GM12878 (cell line): ENCODE measurements at regions of chr3 and their contacts with region 1.

Region 1: DNA sequence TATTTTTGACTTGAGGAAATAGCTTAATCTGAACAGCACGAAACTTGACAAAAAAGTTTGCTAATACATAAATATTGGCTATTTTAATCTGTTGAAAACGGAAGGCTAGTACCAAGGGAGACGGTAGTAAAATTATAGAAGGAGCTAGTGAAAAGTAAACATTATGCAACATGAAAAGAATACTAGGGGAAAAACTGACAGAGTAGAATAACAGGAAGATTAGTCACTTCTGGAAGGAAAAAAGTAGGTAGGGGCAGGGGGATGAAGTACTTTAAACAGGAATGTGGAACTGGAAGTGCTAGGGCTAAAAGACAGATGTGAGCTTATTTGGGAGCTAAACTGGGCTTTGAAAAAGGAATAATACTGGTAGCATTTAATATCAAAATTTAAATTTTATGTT is 60.1 kb downstream of the MBNL1 start:
- DNase-seq: no peak
- ATAC-seq: no peak
- H3K4me3 ChIP-seq: no peak overlapping the region
- H3K27ac ChIP-seq: no peak overlapping the region; the same call in 1 of the 2 replicates
- H3K4me1 ChIP-seq: peaks cover 24% of the 10 kb centered on the region
- H3K27me3 ChIP-seq: no peaks in the 10 kb centered on the region
- CTCF ChIP-seq: no peak
- EP300 ChIP-seq: no peak
- POLR2A ChIP-seq: no peak
- RAD21 ChIP-seq: no peak

Region 2: DNA sequence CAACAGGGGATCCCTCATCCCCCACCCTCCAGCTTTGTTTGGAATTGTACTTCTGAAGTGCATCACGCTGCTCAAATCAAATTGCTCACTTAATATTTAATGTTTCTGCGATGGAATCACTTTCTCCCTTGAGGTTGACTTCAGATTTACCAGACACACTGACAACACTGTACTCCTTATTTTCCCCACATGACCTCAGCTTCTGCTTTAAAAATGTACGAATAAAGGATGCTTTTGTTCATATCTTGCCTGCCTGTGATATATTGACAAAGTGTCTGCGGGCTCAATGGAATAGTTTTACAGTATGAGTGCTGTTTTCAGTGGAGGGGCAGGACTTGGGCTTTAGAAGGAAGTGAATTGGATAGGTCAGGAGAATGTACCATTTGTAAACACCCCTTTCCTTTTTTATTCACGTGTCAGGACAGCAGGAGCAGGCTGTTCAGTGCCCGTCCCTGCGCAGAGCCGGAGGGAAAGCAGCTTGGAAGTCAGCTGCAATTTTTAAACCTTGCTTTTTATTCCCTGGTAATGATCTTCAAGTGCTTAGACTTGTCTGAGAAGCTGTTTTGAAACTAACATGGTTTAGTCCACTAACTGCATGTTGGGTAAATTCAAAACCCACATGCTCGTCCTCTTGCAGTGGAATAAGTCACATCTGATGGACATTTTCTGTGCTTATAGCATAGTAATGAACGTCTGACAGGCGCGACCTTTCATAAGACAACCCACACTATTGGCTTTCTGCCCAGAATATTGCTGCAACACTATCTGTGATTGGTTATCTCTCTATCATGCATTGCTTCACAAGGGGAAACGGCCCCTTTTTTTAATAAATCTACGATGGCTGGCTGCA is 30.2 kb before region 1 on chr3:
- CTCF ChIA-PET with region 1: interaction called, 5 read pairs
- POLR2A ChIA-PET with region 1: interaction called, 5 read pairs
- RAD21 ChIA-PET with region 1: interaction called, 12 read pairs
- SMC1A ChIA-PET with region 1: interaction called, 20 read pairs
- in situ Hi-C with region 1: no loop called
- intact Hi-C with region 1: no loop called
- DNase-seq: peak; percentile 74
- ATAC-seq: peak; percentile 71
- H3K4me3 ChIP-seq: peak overlapping the region; percentile 8
- H3K27ac ChIP-seq: peak overlapping the region; percentile 56
- H3K4me1 ChIP-seq: peaks cover 40% of the 10 kb centered on the region
- H3K27me3 ChIP-seq: no peaks in the 10 kb centered on the region
- CTCF ChIP-seq: no peak
- EP300 ChIP-seq: no peak
- POLR2A ChIP-seq: no peak
- RAD21 ChIP-seq: no peak

Region 3: GRCh38 chr3:152309535-152310307 is 19.1 kb before region 1 on chr3:
- CTCF ChIA-PET with region 1: interaction called, 4 read pairs
- POLR2A ChIA-PET with region 1: interaction called, 5 read pairs
- RAD21 ChIA-PET with region 1: interaction called, 3 read pairs
- SMC1A ChIA-PET with region 1: interaction called, 17 read pairs
- in situ Hi-C with region 1: no loop called
- intact Hi-C with region 1: no loop called
- DNase-seq: no peak
- ATAC-seq: peak; percentile 49
- H3K4me3 ChIP-seq: no peak overlapping the region
- H3K27ac ChIP-seq: no peak overlapping the region
- H3K4me1 ChIP-seq: no peaks in the 10 kb centered on the region
- H3K27me3 ChIP-seq: no peaks in the 10 kb centered on the region
- CTCF ChIP-seq: no peak
- EP300 ChIP-seq: no peak
- POLR2A ChIP-seq: no peak
- RAD21 ChIP-seq: no peak

Region 4: GRCh38 chr3:152346740-152347139 is 17.9 kb after region 1 on chr3:
- CTCF ChIA-PET with region 1: interaction called, 14 read pairs
- POLR2A ChIA-PET with region 1: interaction called, 8 read pairs
- RAD21 ChIA-PET with region 1: interaction called, 4 read pairs
- SMC1A ChIA-PET with region 1: interaction called, 16 read pairs
- in situ Hi-C with region 1: no loop called
- intact Hi-C with region 1: no loop called
- DNase-seq: no peak
- ATAC-seq: no peak
- H3K4me3 ChIP-seq: no peak overlapping the region
- H3K27ac ChIP-seq: no peak overlapping the region
- H3K4me1 ChIP-seq: no peaks in the 10 kb centered on the region; the same call in 1 of the 2 replicates
- H3K27me3 ChIP-seq: no peaks in the 10 kb centered on the region
- CTCF ChIP-seq: no peak
- EP300 ChIP-seq: no peak
- POLR2A ChIP-seq: no peak
- RAD21 ChIP-seq: no peak

Region 5: DNA sequence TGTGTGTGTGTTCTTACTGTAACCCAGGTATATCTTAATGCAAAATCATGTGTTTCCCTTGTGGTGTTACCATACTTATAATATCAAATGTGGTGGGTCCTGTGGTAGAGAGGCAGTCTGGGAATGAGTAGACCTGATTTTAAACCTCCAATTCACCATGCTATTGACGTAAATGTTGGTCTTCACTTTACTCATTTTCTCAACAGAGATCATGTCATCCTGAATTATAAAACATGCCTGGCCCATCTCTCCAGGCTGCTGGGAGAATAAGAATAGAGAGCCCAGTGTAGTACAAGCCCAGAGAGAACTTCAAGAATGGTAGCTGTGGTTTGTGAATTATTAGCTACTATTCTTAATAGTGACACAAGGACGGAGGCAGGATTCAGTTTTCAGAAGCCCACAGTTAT is 28.0 kb after region 1 on chr3:
- CTCF ChIA-PET with region 1: interaction called, 3 read pairs
- POLR2A ChIA-PET with region 1: interaction called, 5 read pairs
- RAD21 ChIA-PET with region 1: interaction called, 7 read pairs
- SMC1A ChIA-PET with region 1: interaction called, 16 read pairs
- in situ Hi-C with region 1: no loop called
- intact Hi-C with region 1: no loop called
- DNase-seq: peak; percentile 61
- ATAC-seq: peak; percentile 89
- H3K4me3 ChIP-seq: no peak overlapping the region
- H3K27ac ChIP-seq: peak overlapping the region; percentile 48
- H3K4me1 ChIP-seq: peaks cover 14% of the 10 kb centered on the region
- H3K27me3 ChIP-seq: no peaks in the 10 kb centered on the region
- CTCF ChIP-seq: no peak
- EP300 ChIP-seq: peak; percentile 90
- POLR2A ChIP-seq: no peak
- RAD21 ChIP-seq: no peak

Region 6: DNA sequence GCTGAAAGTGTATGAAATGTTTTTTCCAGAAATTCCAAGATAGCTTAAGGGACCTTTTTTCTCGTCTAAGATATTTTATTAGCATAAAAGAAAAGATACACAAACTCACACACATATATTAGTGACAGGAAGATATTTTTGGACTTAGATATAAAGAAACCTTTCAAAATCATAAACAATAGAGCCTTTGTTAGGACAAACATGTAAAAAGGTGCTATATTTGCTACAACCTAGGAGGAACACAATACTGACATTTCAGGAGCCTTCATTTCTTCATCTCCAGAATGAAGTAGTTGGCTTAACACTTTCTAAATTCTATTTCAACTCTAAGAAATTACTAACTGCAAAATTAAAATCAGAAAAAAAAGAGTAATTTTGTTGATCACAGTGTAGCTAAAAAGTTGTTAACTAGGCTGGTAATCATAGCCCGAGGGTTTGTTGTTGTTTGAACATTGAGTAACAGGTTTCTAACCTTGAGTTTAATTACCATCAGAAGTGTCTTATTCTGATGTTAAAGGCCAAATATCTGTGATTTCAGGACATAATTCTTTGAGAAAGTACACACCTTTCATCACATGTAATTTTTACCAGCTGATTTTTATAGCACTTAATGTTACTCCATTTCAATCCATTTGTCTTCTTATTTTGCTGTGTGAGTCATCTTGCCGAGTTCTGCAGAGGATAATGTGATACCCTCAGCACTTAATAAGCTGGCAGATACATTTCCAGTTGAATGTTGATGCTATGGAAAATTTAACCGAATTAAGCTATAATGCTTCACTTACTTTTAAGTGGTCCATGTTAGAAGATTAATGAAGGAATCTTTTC is 37.1 kb after region 1 on chr3:
- CTCF ChIA-PET with region 1: interaction called, 5 read pairs
- POLR2A ChIA-PET with region 1: interaction called, 4 read pairs
- RAD21 ChIA-PET with region 1: interaction called, 3 read pairs
- SMC1A ChIA-PET with region 1: interaction called, 11 read pairs
- in situ Hi-C with region 1: no loop called
- intact Hi-C with region 1: no loop called
- DNase-seq: no peak
- ATAC-seq: no peak
- H3K4me3 ChIP-seq: no peak overlapping the region
- H3K27ac ChIP-seq: no peak overlapping the region
- H3K4me1 ChIP-seq: no peaks in the 10 kb centered on the region
- H3K27me3 ChIP-seq: no peaks in the 10 kb centered on the region
- CTCF ChIP-seq: no peak
- EP300 ChIP-seq: no peak
- POLR2A ChIP-seq: no peak
- RAD21 ChIP-seq: no peak

Region 7: DNA sequence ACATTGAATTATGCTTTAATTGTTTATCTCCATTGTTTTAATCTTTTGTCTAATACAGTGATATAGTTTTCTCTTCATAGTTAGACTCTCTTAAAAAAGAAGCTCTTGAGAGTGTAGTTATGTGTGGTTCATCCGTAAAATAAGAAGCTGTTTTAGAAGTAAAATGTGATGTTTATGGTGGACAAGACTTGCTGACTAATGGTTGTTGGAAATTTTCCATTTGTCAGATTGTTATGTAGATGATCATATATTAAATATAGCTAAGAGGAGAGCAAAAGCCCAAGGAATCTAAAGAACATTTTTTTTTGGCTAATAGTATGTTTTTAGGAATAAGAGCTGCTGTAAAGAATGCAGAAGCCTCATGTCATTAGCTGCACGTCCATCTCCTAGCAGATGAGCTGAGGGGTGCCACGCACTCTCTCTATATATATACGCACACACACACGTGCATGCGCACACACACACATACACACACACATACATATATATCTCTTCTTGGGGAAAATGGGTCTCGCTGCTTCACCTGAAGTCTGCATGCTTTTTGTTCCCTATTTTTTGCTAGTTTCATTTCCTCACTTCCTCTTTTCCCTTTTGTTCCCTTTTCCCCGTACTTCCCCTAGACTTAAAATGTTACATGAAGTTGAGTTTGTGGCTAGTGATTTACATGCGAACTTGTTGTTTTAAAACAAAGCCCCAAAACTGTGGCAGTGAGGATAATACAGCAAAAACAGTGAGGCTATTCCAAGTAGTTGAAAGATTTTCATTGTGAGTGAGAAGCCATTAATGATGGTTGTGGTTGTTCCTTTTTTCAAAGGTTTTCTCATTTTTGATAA is 47.7 kb after region 1 on chr3:
- CTCF ChIA-PET with region 1: interaction called, 7 read pairs
- POLR2A ChIA-PET with region 1: interaction called, 4 read pairs
- RAD21 ChIA-PET with region 1: interaction called, 11 read pairs
- SMC1A ChIA-PET with region 1: interaction called, 14 read pairs
- in situ Hi-C with region 1: no loop called
- intact Hi-C with region 1: no loop called
- DNase-seq: peak; percentile 97
- ATAC-seq: peak; percentile 83
- H3K4me3 ChIP-seq: no peak overlapping the region; the same call in 1 of the 2 replicates
- H3K27ac ChIP-seq: peak overlapping the region; percentile 90
- H3K4me1 ChIP-seq: peaks cover 30% of the 10 kb centered on the region
- H3K27me3 ChIP-seq: no peaks in the 10 kb centered on the region
- CTCF ChIP-seq: no peak
- EP300 ChIP-seq: peak; percentile 95 to 99
- POLR2A ChIP-seq: peak; percentile 53
- RAD21 ChIP-seq: no peak